BJ (cell line): ENCODE measurements at regions of chr18 and their contacts with region 1.

Region 1: DNA sequence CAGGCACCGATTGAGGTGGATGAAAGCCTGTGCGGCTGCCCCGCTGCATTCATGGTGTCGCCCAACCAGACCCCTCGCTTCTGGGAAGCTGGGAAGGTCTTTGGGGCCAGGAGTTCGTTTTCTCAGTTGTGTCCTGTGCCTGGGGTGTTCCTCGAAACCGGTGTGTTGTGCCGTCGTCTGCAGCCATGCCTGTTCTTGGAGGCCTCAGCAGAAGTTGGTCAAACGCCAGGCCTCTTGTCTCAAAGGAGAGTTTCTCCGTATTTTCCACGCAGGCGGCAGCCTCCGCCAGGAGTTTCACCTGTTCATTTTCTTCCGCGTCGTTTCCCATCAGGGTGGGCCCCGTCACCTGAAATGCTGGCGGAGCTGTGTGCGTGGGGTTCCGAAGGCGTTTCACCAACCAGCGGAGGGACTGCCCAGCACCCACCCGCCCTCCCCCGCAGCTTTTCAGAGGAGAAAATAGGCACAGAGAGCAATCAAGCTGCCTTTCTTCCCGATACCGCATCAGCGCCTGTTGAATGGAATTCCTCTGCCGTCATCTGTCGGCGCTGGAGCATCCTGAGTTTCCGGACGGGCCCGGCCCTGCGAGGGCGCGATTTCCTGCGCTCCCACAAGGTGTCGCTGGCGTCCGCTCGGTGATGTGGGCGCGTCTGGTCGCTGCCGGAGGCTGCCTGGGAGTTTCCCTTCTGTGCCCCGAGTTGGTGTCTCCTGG is 17.0 kb upstream of the NFATC1 start:
- DNase-seq: no peak
- H3K4me3 ChIP-seq: no peak overlapping the region
- H3K27me3 ChIP-seq: no peaks in the 10 kb centered on the region
- CTCF ChIP-seq: peak; percentile 97

Region 2: DNA sequence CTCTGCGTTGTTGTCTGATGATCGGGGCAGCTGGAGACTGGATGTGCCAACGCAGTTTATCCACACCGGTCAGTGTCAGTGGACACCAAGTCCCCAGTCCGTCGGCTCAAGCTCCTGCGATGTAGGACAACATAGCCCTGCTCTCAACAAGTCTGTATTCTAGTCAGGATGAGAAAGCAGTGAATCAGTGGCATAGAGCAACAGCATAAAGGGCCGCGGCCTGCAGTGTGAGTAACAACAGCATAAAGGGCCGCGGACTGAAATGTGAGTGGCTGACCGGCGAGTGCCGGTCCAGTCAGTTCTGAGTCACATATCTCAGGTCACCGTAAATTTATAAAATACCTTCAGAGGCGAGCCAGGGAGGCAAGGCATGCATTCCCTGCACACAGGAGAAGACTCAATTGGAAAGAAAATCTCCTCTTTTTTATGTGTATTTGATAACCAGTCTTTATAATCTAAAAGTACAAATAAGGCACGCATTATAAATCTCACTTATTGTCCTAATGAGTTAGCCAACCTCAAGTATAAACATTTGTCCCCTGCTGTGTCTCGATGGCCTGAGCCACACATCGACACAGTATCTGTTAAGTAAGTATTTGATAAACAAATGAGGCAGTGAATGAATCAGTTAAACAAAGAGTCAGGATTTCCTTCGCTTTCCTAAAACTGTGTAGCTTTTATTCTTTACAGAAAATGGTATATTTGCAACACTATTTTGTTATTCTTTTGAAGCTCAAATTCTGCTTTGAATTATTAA is 16.8 kb before region 1 on chr18:
- CTCF ChIA-PET with region 1: interaction called, 13 read pairs
- POLR2A ChIA-PET with region 1: no interaction called
- DNase-seq: no peak
- H3K4me3 ChIP-seq: no peak overlapping the region
- H3K27me3 ChIP-seq: no peaks in the 10 kb centered on the region
- CTCF ChIP-seq: no peak

Region 3: DNA sequence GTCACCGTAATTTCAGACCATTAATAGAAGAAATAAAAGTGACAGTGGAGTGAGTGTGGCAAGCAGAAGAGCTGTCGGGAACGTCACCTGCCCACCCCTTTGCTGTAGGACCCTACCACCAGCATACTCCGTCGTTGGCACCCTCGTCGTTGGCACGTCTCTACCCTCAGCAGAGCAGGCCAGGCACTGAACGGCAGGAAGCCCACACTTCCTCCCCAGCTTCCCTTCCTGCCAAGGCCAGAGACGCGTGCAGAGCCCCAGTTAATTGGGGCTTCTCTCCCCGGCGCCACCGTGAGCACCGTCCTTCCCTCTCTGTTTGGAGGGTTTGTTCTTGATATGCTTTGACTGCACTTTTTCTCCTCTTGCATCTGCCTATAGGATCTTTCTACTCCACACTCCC is 10.0 kb before region 1 on chr18:
- CTCF ChIA-PET with region 1: interaction called, 10 read pairs
- POLR2A ChIA-PET with region 1: no interaction called
- DNase-seq: no peak
- H3K4me3 ChIP-seq: no peak overlapping the region
- H3K27me3 ChIP-seq: no peaks in the 10 kb centered on the region
- CTCF ChIP-seq: no peak

Region 4: GRCh38 chr18:79393635-79394533 is 15.2 kb after region 1 on chr18:
- CTCF ChIA-PET with region 1: interaction called, 38 read pairs
- POLR2A ChIA-PET with region 1: no interaction called
- DNase-seq: no peak
- H3K4me3 ChIP-seq: peak overlapping the region; percentile 52
- H3K27me3 ChIP-seq: peaks cover 9% of the 10 kb centered on the region
- CTCF ChIP-seq: no peak

Region 5: GRCh38 chr18:79528846-79529245 is 150.2 kb after region 1 on chr18:
- CTCF ChIA-PET with region 1: interaction called, 190 read pairs
- POLR2A ChIA-PET with region 1: no interaction called
- DNase-seq: peak; percentile 5
- H3K4me3 ChIP-seq: no peak overlapping the region
- H3K27me3 ChIP-seq: peaks cover 11% of the 10 kb centered on the region
- CTCF ChIP-seq: peak; percentile 90

Region 6: DNA sequence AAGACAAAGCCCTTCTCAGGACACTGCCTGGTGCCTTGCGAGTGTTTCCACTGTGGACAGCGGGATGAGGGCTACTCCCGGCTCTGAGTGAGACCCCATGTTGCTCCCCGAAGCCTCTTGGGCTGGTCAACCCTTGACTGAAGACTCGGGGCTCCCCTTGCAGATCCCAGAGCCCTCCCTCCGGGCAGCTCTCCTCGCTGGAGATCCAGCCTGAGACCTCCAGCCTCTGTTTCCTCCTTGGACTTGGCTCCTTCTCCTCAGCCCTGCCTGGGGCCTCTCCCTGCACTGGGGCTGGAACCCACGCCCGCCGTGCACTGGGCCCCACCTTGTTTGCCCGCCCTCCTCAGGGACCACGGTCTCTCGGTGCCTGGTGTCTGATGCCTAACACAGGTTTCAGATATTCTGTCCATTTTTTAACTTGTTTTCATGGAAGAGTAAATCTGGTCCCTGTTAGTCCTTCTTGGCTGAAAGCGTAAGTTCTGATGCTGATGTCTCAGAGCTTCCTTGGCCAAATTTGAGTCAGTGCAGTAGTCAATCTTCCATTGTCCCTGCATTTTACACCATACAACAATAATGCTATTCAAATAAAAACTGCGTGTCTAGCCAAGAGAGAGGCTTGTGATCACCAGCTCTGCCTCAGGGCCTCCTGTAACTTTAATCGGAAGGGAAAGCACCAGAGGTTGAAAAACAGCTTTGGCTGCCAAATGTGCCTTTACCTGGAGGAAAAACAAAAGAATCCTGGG is 161.6 kb after region 1 on chr18:
- CTCF ChIA-PET with region 1: interaction called, 18 read pairs
- POLR2A ChIA-PET with region 1: no interaction called
- DNase-seq: no peak
- H3K4me3 ChIP-seq: no peak overlapping the region
- H3K27me3 ChIP-seq: peaks cover 3% of the 10 kb centered on the region
- CTCF ChIP-seq: no peak

Region 7: DNA sequence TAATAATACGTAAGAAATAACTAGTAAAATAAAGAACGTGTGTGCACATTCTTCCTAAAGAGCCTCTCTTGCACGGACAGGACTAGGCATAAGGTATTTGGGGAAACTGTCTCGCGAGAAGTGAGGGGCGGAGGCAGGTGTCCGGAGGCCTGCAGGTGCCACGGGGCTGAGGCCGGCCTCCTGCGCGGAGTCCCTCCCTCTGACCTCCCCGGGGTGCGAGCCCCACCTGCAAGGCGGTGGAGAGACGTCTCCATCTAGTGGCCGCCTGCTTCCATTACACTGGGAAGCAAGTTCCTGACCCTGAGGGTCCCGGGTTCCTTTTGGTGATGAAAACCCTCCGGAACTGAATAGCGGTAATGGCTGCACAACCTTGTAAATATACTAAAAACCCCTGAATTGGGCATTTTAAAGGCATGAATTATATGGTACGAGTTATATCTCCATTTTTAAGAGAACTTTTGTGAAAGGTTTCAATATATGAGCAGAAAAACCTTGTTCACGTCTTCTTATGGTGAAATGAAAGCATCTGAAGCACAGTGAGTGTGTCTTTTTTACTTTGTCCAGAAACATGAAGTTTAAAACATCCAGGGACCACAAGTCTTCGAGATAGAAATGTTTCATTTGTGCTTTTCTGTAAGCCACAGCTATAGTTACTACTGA is 265.4 kb after region 1 on chr18:
- CTCF ChIA-PET with region 1: interaction called, 32 read pairs
- POLR2A ChIA-PET with region 1: no interaction called
- DNase-seq: no peak
- H3K4me3 ChIP-seq: no peak overlapping the region
- H3K27me3 ChIP-seq: peaks cover 4% of the 10 kb centered on the region
- CTCF ChIP-seq: peak; percentile 99